ENCODE measurements at regions of chr7 and their contacts with region 1.

Region 1: DNA sequence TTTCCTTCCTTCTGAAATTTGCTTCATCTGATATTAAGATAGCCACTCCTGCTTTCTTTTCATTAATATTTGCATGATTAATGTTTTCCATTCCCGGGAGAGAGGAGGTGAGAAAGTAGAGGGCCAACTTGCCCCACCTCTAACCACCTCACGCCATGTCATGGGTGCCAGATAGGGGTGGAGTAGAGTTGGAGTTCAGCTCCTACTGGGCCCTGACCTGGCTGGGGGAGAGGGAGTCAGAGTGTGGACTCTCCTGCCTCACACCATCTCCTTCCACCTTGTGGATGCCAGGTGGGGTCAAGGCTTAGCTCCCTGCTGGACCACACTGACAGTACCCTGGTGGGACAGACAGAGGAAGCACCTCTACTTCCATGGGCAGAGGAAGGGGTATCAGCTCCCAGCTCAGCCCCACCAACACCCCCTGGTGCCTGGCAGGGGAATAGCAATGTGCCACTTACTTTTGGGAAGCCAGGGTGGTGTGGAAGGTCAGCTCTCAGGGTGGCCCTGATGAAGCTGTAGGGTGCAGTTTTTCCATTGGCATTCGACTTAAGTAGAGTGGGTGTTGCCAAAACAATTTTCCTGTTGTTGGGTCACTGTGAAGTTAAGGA is 28.0 kb downstream of the CHST12 start:
- DNase-seq: peak in 7 of 9 donors; percentile 18 to 43 (median 23)
- ATAC-seq: peak; percentile 70
- H3K4me3 ChIP-seq: no peak overlapping the region
- H3K4me3 Mint-ChIP-seq: no peak overlapping the region
- H3K27ac ChIP-seq: no peak overlapping the region
- H3K27ac Mint-ChIP-seq: no peak overlapping the region
- H3K4me1 ChIP-seq: peaks cover 0 to 5% of the 10 kb centered on the region in 2 donors
- H3K4me1 Mint-ChIP-seq: peaks cover 0 to 18% (median 3%) of the 10 kb centered on the region in 7 donors
- H3K27me3 ChIP-seq: no peaks in the 10 kb centered on the region
- H3K27me3 Mint-ChIP-seq: no peaks in the 10 kb centered on the region

Region 2: DNA sequence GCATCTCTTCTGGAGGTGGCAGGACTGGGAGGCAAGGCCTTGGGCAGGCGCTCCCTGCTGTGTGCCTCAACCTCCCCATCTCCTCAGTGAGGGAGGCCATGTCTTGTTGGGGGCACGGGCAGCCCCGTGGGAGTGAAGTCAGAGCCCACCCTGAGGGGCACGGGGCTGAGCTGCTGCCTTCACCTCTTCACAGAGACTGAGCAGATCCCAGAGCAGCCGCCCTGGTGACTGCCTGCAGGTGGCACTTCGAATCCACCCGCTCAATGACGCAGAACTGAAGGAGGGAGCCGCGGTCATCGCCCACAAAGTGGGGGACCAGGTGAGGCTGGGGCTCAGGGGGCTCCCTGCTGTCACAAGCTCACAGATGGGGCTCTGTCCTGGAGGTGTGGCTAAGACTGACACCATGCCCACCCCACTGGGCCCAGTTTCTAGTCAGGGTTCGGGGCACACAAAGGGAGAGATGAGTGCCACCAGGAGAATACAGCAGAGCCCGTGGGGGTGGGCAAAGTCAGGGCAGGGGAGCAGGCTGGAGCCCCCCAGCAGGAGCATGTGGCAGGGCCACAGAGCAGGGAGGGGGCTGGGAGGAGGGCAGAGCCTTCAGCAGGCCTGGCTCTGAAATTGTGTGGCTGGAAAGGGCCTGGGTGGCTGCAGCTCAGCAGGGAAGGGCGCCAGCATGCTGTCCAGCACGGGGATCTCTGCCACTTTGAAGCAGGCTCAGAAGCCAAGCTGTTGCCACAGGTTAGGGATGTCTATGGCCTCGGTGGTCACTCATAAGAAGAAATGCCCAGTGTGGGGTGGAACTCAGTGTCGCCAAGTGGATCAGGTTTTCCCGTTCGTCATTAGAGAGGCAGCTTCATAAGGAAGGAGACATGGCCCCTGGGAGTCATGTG is 46.8 kb before region 1 on chr7:
- CTCF ChIA-PET with region 1: interaction called, 3 read pairs
- POLR2A ChIA-PET with region 1: no interaction called
- intact Hi-C with region 1: loop called in 1 of 2 experiments (anchors 1 kb)
- DNase-seq: no peak
- ATAC-seq: peak; percentile 23
- H3K4me3 ChIP-seq: no peak overlapping the region
- H3K4me3 Mint-ChIP-seq: no peak overlapping the region
- H3K27ac ChIP-seq: no peak overlapping the region
- H3K27ac Mint-ChIP-seq: no peak overlapping the region
- H3K4me1 ChIP-seq: no peaks in the 10 kb centered on the region
- H3K4me1 Mint-ChIP-seq: no peaks in the 10 kb centered on the region
- H3K27me3 ChIP-seq: no peaks in the 10 kb centered on the region
- H3K27me3 Mint-ChIP-seq: no peaks in the 10 kb centered on the region